ENCODE measurements at regions of chr7 and their contacts with region 1.

Region 1: GRCh38 chr7:7968543-7969305 is at the start of gene GLCCI1:
- DNase-seq: peak; percentile 90 to 94 (median 91)
- H3K4me3 ChIP-seq: peak within 1 kb of the TSS; percentile 78 to 94 (median 82)
- H3K4me3 Mint-ChIP-seq: peak within 1 kb of the TSS; percentile 93 to 98
- H3K27ac ChIP-seq: peak within 1 kb of the TSS; percentile 55 to 74
- H3K27ac Mint-ChIP-seq: peak within 1 kb of the TSS; percentile 70 to 90 (median 83)
- H3K4me1 ChIP-seq: peaks cover 12 to 28% of the 10 kb centered on the region in 2 donors
- H3K4me1 Mint-ChIP-seq: peaks cover 4% of the 10 kb centered on the region
- H3K27me3 ChIP-seq: peaks cover 2 to 12% of the 10 kb centered on the region in 2 donors
- H3K27me3 Mint-ChIP-seq: peaks cover 0 to 1% (median 0%) of the 10 kb centered on the region in 3 donors
- CTCF ChIP-seq: no peak
- polyA plus RNA-seq, gene GLCCI1: 0.89 to 2.1 (median 1.1) TPM

Region 2: DNA sequence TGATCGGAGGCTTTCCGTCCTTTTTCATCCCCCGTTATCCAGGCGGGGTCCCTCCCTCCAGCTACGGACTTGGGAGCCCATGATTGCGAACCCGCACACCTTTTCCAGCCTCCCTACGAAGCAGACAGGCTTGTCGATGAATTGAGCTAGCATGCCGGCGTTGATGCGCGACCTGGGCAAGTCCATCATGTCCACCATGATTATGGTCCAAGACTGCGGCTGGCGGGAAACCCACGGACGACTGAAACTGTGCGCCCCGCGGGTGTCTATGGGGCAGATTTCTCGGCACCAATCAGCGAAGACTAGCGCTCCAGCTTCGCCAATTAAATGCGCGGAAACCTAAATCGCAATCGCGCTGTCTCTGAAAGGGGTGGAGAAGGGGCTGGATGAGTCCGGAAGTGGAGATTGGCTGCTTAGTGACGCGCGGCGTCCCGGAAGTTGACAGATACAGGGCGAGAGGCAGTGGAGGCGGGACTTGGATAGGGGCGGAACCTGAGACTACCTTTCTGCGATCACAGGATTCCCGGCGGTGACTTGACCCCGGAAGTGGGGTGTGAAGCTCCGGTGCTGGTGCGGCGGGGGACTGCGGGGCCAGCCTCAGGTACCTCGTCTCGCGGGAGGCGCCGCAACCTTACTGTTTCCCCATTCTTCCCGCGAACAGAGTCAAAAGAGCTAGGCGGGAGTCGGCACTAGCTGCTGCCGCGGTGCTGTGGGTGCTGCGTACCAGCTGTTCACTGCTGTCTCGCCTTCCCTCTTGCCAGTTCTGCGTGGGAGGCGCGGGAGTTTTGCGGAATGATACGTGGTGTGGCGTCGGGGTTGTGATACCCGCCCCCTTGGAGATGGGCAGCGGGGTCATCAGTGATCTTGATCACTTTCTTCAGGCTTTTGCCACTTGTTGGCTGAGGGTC is 328.2 kb before region 1 on chr7 and contains the start of gene UMAD1:
- intact Hi-C with region 1: loop called (anchors 2 kb)
- DNase-seq: peak; percentile 97 to 98 (median 98)
- H3K4me3 ChIP-seq: peak within 1 kb of the TSS; percentile 74 to 92 (median 78)
- H3K4me3 Mint-ChIP-seq: peak within 1 kb of the TSS; percentile 94 to 98
- H3K27ac ChIP-seq: peak within 1 kb of the TSS; percentile 70 to 90
- H3K27ac Mint-ChIP-seq: peak within 1 kb of the TSS; percentile 94 to 98 (median 97)
- H3K4me1 ChIP-seq: peaks cover 17 to 20% of the 10 kb centered on the region in 2 donors
- H3K4me1 Mint-ChIP-seq: peaks cover 24% of the 10 kb centered on the region
- H3K27me3 ChIP-seq: no peaks in the 10 kb centered on the region
- H3K27me3 Mint-ChIP-seq: peaks cover 0 to 2% (median 0%) of the 10 kb centered on the region in 3 donors
- CTCF ChIP-seq: no peak
- polyA plus RNA-seq, gene UMAD1: 6.2 to 22.7 (median 18.6) TPM

Region 3: DNA sequence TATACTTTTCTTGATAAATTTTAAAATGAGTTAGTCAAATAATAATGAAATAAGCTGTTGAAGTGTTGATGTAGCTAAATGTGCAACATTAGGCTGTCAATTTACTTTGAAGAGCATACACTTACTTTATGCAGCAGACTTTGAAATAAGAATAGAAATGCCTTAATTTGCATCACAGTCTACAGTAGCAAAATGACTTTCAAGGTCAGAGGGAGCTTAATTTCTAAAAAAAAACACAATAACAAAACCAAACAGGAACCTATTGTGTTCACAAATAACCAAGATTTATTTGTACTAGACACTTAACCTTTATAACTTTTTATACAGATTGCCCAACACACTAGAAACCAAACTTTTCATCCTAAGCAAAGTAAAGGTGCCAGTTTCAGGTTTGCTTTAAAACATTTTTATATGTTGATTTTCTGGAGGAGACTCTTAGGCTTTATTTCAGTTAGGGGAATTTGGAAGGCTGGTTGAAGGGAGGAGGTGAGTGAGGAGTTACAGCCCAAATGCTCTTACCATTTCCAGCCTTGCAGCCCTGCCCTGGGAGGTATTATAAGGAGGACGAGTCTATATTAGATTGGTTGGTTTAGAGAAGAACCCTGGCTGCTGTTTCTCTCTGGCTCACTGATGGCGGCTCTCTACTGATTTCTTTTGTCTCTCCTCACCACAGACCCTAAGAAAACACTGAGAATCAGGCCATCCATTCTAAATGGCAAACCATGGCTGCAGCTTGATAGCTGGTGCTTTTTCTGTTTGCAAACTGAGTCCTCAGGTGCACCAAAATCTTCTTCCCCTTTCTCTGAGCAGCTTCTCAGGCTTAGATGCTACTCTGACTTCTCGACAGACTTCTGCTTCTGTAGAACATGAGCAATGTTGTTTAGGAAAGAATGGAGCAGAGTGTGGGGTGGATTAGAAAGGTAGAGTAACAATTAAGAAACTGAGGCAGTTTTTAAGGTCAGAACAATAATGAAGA is 195.1 kb before region 1 on chr7:
- intact Hi-C with region 1: no loop called
- DNase-seq: no peak
- H3K4me3 ChIP-seq: no peak overlapping the region
- H3K4me3 Mint-ChIP-seq: no peak overlapping the region
- H3K27ac ChIP-seq: no peak overlapping the region
- H3K27ac Mint-ChIP-seq: no peak overlapping the region
- H3K4me1 ChIP-seq: no peaks in the 10 kb centered on the region
- H3K4me1 Mint-ChIP-seq: peaks cover 3% of the 10 kb centered on the region
- H3K27me3 ChIP-seq: no peaks in the 10 kb centered on the region
- H3K27me3 Mint-ChIP-seq: no peaks in the 10 kb centered on the region
- CTCF ChIP-seq: no peak

Region 4: GRCh38 chr7:8189625-8190024 is 220.9 kb after region 1 on chr7:
- intact Hi-C with region 1: loop called in 1 of 2 experiments (anchors 10 kb)
- DNase-seq: no peak
- H3K4me3 ChIP-seq: no peak overlapping the region
- H3K4me3 Mint-ChIP-seq: no peak overlapping the region
- H3K27ac ChIP-seq: no peak overlapping the region
- H3K27ac Mint-ChIP-seq: no peak overlapping the region
- H3K4me1 ChIP-seq: peaks cover 14 to 15% of the 10 kb centered on the region in 2 donors
- H3K4me1 Mint-ChIP-seq: peaks cover 15% of the 10 kb centered on the region
- H3K27me3 ChIP-seq: no peaks in the 10 kb centered on the region
- H3K27me3 Mint-ChIP-seq: peaks cover 0 to 2% (median 0%) of the 10 kb centered on the region in 3 donors
- CTCF ChIP-seq: no peak